PC-3 (cell line): ENCODE measurements at regions of chr20 and their contacts with region 1.

Region 1: GRCh38 chr20:47357296-47358035 is 967 bp upstream of the ZMYND8 start:
- DNase-seq: peak; percentile 96
- ATAC-seq: peak; percentile 32
- H3K4me3 ChIP-seq: no peak overlapping the region
- H3K27ac ChIP-seq: peak overlapping the region; percentile 96
- H3K4me1 ChIP-seq: peaks cover 91% of the 10 kb centered on the region
- H3K27me3 ChIP-seq: no peaks in the 10 kb centered on the region
- CTCF ChIP-seq: no peak

Region 2: GRCh38 chr20:47220161-47220582 is 137.3 kb before region 1 on chr20:
- CTCF ChIA-PET with region 1: no interaction called
- POLR2A ChIA-PET with region 1: interaction called, 15 read pairs
- intact Hi-C with region 1: no loop called
- DNase-seq: peak; percentile 55
- ATAC-seq: no peak
- H3K4me3 ChIP-seq: no peak overlapping the region
- H3K27ac ChIP-seq: no peak overlapping the region
- H3K4me1 ChIP-seq: no peaks in the 10 kb centered on the region
- H3K27me3 ChIP-seq: no peaks in the 10 kb centered on the region
- CTCF ChIP-seq: peak; percentile 90

Region 3: DNA sequence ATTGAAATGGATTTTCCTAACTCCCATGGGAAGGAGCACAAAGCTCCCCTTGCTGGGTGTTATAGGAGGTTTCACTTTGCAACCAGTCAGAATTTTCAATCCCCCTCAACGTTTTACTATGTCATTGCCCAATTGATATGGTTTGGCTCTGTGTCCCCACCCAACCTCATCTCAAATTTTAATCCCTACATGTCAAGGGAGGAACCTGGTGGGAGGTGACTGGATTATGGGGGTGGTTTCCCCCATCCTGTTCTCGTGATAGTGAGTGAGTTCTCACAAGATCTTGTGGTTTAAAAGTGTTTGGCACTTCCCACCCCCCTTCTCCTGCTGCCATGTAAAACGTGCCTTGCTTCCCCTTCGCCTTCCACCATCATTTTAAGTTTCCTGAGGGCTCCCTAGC is 63.8 kb before region 1 on chr20:
- CTCF ChIA-PET with region 1: no interaction called
- POLR2A ChIA-PET with region 1: no interaction called
- intact Hi-C with region 1: no loop called
- DNase-seq: no peak
- ATAC-seq: no peak
- H3K4me3 ChIP-seq: no peak overlapping the region
- H3K27ac ChIP-seq: no peak overlapping the region
- H3K4me1 ChIP-seq: no peaks in the 10 kb centered on the region
- H3K27me3 ChIP-seq: no peaks in the 10 kb centered on the region
- CTCF ChIP-seq: no peak

Region 4: GRCh38 chr20:47304287-47304686 is 53.2 kb before region 1 on chr20:
- CTCF ChIA-PET with region 1: interaction called, 5 read pairs
- POLR2A ChIA-PET with region 1: interaction called, 3 read pairs
- intact Hi-C with region 1: loop called (anchors 2 kb)
- DNase-seq: peak; percentile 59
- ATAC-seq: peak; percentile 98
- H3K4me3 ChIP-seq: no peak overlapping the region
- H3K27ac ChIP-seq: no peak overlapping the region
- H3K4me1 ChIP-seq: peaks cover 8% of the 10 kb centered on the region; the same call in 1 of the 2 replicates
- H3K27me3 ChIP-seq: no peaks in the 10 kb centered on the region
- CTCF ChIP-seq: peak; percentile 52; the same call in 1 of the 2 replicates

Region 5: GRCh38 chr20:47317127-47317895 is 40.2 kb before region 1 on chr20:
- CTCF ChIA-PET with region 1: interaction called, 6 read pairs
- POLR2A ChIA-PET with region 1: interaction called, 6 read pairs
- intact Hi-C with region 1: loop called (anchors 1 kb)
- DNase-seq: peak; percentile 96
- ATAC-seq: peak; percentile 60
- H3K4me3 ChIP-seq: 0 out of 2 replicates have a peak overlapping the region, but pooled peaks have one; percentile 19
- H3K27ac ChIP-seq: peak overlapping the region; percentile 95
- H3K4me1 ChIP-seq: peaks cover 70% of the 10 kb centered on the region
- H3K27me3 ChIP-seq: no peaks in the 10 kb centered on the region
- CTCF ChIP-seq: no peak

Region 6: DNA sequence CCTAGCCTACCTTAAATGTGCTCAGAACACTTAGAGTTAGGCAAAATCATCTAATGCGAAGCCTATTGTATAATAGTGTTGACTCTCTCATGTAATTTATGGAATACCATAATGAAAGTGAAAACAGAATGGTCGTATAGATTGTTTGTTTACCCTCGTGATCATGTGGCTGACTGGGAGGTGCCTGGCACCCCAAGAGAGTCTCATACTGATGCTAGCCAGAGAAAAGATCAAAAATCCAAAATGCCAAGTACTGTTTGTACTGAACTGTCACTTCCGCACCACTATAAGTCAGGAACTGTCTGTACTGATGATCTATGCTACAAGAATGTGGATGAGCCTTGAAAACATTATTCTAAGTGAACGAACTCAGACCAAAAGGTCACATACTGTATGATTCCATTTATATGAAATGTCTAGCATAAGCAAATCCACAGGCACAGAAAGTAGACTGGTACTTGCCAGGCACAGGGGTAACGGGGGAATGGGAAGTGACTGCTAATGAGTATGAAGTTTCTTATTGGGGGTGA is 23.4 kb before region 1 on chr20:
- CTCF ChIA-PET with region 1: interaction called, 4 read pairs
- POLR2A ChIA-PET with region 1: interaction called, 16 read pairs
- intact Hi-C with region 1: loop called (anchors 1 kb)
- DNase-seq: peak; percentile 98
- ATAC-seq: peak; percentile 95
- H3K4me3 ChIP-seq: peak overlapping the region; percentile 58
- H3K27ac ChIP-seq: peak overlapping the region; percentile 71
- H3K4me1 ChIP-seq: peaks cover 47% of the 10 kb centered on the region
- H3K27me3 ChIP-seq: no peaks in the 10 kb centered on the region
- CTCF ChIP-seq: no peak

Region 7: GRCh38 chr20:47379433-47380150 is 22.1 kb after region 1 on chr20:
- CTCF ChIA-PET with region 1: interaction called, 23 read pairs
- POLR2A ChIA-PET with region 1: interaction called, 3 read pairs
- intact Hi-C with region 1: loop called (anchors 1 kb)
- DNase-seq: no peak
- ATAC-seq: no peak
- H3K4me3 ChIP-seq: no peak overlapping the region
- H3K27ac ChIP-seq: no peak overlapping the region
- H3K4me1 ChIP-seq: peaks cover 12% of the 10 kb centered on the region
- H3K27me3 ChIP-seq: no peaks in the 10 kb centered on the region
- CTCF ChIP-seq: no peak

Region 8: DNA sequence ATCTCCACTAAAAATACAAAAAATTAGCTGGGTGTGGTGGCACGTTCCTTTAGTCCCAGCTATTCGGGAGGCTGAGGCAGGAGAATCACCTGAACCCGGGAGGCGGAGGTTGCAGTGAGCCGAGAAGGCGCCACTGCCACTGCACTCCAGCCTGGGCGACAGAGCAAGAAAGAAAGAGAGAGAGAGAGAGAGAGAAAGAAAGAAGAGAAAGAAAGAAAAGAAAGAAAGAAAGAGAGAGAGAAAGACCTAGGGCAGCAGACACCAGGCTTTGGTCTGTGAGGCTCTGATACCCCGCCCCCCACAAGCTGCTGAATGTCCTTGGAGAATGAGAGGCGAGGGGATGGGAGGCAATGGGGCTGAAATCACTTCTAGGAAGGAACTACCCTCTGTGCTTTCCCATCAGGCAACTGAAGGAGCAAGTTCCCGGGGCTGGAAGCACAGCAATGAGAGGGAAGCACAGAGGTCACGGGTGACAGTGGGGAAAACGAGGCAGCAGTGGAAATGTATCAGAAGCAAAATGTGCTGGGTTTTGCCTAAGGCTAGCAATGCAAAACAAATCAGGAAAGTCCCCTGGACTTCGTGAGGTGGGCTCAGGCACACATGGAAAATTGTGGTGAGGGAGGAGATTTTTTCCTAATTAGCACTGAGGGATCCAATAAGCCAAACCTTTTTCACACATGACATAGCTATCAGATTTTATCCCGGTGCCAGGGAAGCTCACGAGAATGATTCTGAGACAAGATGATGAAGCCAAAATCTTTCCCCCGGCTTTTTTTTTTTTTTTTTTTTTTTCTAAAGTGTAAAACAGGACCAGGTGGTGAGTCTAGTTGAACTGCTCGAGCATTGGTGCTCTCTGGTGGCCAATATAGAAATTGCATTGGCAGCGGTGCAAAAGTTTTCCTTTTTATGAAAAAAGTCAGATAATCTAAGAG is 1547.2 kb after region 1 on chr20:
- CTCF ChIA-PET with region 1: interaction called, 17 read pairs
- POLR2A ChIA-PET with region 1: no interaction called
- intact Hi-C with region 1: no loop called
- DNase-seq: peak; percentile 93
- ATAC-seq: peak; percentile 50
- H3K4me3 ChIP-seq: peak overlapping the region; percentile 13; the same call in 1 of the 2 replicates
- H3K27ac ChIP-seq: no peak overlapping the region
- H3K4me1 ChIP-seq: peaks cover 9% of the 10 kb centered on the region
- H3K27me3 ChIP-seq: no peaks in the 10 kb centered on the region
- CTCF ChIP-seq: peak; percentile 95